ENCODE measurements at regions of chr15 and their contacts with region 1.

Region 1: GRCh38 chr15:80776420-80777045 is 2.6 kb upstream of the CEMIP start:
- DNase-seq: peak; percentile 9 to 51
- ATAC-seq: peak; percentile 42 to 51
- H3K4me3 ChIP-seq: no peak overlapping the region
- H3K27ac ChIP-seq: peak overlapping the region in 1 of 4 donors; percentile 35
- H3K4me1 ChIP-seq: peaks cover 20 to 24% of the 10 kb centered on the region in 2 donors
- H3K27me3 ChIP-seq: peaks cover 24 to 28% (median 25%) of the 10 kb centered on the region in 3 donors
- CTCF ChIP-seq: peak; percentile 47 to 78 (median 72)
- POLR2A ChIP-seq: no peak

Region 2: DNA sequence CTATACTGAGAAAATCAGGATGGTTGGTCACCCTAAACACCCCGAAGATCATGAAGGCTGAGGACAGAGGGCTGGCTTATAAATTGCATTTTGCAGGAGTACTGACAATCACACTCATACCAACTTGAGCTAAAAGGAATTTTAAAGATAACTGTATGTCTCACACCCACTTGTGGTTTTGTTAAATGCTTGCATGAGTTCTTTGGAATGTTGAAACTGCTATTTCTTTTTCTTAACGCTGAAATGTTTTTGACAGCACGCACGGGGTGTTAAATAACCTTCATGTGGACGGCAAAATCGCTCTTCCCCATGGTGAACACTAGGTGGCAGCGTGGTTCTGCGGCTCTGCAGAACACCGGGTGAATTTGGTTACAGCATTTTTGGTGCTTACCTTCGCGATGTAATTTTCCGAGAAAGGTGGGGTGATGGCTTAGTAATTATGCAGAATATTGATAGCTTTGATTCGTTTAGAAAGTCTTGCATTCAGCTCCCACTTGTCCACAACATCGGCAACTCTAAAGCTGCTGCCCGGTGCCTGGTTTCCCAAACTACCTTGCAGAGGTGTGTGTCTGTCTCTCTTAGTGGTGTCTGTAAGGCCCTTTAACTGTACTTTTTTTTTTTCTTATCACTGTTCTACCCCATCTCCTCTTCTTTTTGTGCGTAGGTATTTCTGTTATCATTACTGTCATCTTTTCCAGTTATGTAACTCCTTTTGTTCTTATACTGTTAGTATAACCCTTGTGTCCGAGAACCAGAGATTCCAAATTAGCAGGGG is 320.7 kb before region 1 on chr15:
- in situ Hi-C with region 1: loop called (anchors 5 kb)
- intact Hi-C with region 1: loop called (anchors 1 kb)
- DNase-seq: peak; percentile 21 to 24
- ATAC-seq: peak; percentile 33 to 81
- H3K4me3 ChIP-seq: no peak overlapping the region
- H3K27ac ChIP-seq: no peak overlapping the region
- H3K4me1 ChIP-seq: no peaks in the 10 kb centered on the region
- H3K27me3 ChIP-seq: no peaks in the 10 kb centered on the region
- CTCF ChIP-seq: peak; percentile 75 to 95 (median 83)
- POLR2A ChIP-seq: no peak

Region 3: DNA sequence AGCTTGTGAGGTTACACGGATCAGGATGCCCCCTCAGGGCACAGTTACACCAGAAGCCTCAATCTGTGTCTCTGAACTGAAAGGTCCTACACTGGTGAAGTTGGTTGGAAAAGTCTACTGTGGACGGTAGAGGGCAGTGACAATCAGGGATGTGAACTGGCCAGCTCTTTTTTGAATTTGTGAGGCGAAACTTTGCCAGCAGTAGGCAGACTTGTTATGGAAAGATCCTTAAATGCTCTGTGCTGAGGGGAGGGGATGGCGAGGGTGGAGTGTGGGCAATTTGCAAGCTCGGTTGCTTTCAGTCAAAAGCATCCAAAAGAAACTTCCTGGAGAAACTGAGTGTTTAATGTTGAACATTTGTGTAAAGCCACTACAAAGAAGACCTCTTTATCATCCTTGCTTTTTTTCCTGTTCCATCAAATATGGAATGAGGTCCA is 208.8 kb before region 1 on chr15:
- in situ Hi-C with region 1: loop called in 1 of 4 experiments (anchors 25 kb)
- intact Hi-C with region 1: loop called (anchors 1 kb)
- DNase-seq: peak in 1 of 2 donors; percentile 14
- ATAC-seq: peak in 1 of 2 donors; percentile 49
- H3K4me3 ChIP-seq: no peak overlapping the region
- H3K27ac ChIP-seq: no peak overlapping the region
- H3K4me1 ChIP-seq: no peaks in the 10 kb centered on the region
- H3K27me3 ChIP-seq: no peaks in the 10 kb centered on the region
- CTCF ChIP-seq: peak in 4 of 5 experiments; percentile 12 to 47 (median 36)
- POLR2A ChIP-seq: no peak

Region 4: GRCh38 chr15:80615761-80616391 is 160.7 kb before region 1 on chr15:
- in situ Hi-C with region 1: no loop called
- intact Hi-C with region 1: loop called (anchors 5 kb)
- DNase-seq: peak in 1 of 2 donors; percentile 24
- ATAC-seq: peak in 1 of 2 donors; percentile 33
- H3K4me3 ChIP-seq: no peak overlapping the region
- H3K27ac ChIP-seq: no peak overlapping the region
- H3K4me1 ChIP-seq: peaks cover 0 to 2% of the 10 kb centered on the region in 2 donors
- H3K27me3 ChIP-seq: no peaks in the 10 kb centered on the region
- CTCF ChIP-seq: no peak
- POLR2A ChIP-seq: no peak

Region 5: GRCh38 chr15:80695104-80695910 is 81.2 kb before region 1 on chr15 and contains the start of gene ABHD17C:
- in situ Hi-C with region 1: no loop called
- intact Hi-C with region 1: loop called (anchors 2 kb)
- DNase-seq: peak; percentile 22 to 25
- ATAC-seq: peak; percentile 80 to 84
- H3K4me3 ChIP-seq: peak within 1 kb of the TSS; percentile 65 to 93 (median 82)
- H3K27ac ChIP-seq: peak within 1 kb of the TSS; percentile 64 to 82 (median 70)
- H3K4me1 ChIP-seq: peaks cover 7 to 10% of the 10 kb centered on the region in 2 donors
- H3K27me3 ChIP-seq: no peaks in the 10 kb centered on the region
- CTCF ChIP-seq: no peak
- POLR2A ChIP-seq: no peak
- total RNA-seq, gene ABHD17C: 0.98 to 3.3 (median 2.5) TPM in 3 of 4 donors, not detected in the other

Region 6: DNA sequence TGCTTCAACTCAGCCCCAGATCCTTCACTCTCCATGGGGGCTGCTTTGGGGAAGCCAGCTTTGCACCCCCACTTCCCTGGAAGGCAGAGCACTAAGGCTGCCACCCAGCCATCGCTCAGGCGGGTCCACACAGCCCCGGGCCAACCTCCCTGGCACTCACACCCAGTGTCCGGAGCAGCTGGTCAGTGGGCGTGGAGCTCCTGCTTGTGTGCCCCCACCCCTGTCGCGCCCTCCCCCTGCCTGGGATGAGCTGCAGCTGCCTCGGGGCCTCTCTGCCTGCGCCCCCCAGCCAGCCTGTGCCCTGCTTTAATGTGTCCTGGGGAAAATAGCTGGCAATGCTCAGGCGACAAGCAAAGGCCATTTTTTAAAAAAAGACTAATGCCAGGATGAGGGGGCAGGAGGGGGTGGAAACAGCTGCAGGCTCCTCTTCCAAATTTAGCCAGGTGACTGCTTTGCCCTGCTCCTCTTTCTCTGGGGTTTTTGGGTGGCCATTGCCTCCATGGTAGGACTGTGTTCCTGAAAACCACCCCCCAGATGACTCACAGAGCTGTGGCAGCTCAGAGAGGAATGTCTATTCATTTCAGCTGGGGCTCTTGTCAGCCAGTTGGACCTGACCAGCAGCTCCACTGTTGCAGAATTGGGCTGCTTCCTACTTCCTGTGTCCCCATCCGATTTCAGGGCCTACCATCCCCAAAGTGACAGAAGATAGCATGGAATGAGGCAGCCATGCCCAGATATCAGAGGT is 67.7 kb after region 1 on chr15:
- in situ Hi-C with region 1: no loop called
- intact Hi-C with region 1: no loop called
- DNase-seq: no peak
- ATAC-seq: peak in 1 of 2 donors; percentile 16
- H3K4me3 ChIP-seq: no peak overlapping the region
- H3K27ac ChIP-seq: no peak overlapping the region
- H3K4me1 ChIP-seq: no peaks in the 10 kb centered on the region
- H3K27me3 ChIP-seq: peaks cover 4 to 11% (median 5%) of the 10 kb centered on the region in 3 donors
- CTCF ChIP-seq: no peak
- POLR2A ChIP-seq: no peak

Region 7: GRCh38 chr15:80856809-80857377 is 80.4 kb after region 1 on chr15:
- in situ Hi-C with region 1: no loop called
- intact Hi-C with region 1: no loop called
- DNase-seq: peak; percentile 47 to 48
- ATAC-seq: peak; percentile 54 to 63
- H3K4me3 ChIP-seq: no peak overlapping the region
- H3K27ac ChIP-seq: no peak overlapping the region
- H3K4me1 ChIP-seq: peaks cover 7% of the 10 kb centered on the region in 2 donors
- H3K27me3 ChIP-seq: no peaks in the 10 kb centered on the region
- CTCF ChIP-seq: no peak
- POLR2A ChIP-seq: no peak

Region 8: GRCh38 chr15:80970018-80970658 is 193.6 kb after region 1 on chr15:
- in situ Hi-C with region 1: loop called in 2 of 4 experiments (anchors 5 to 25 kb)
- intact Hi-C with region 1: loop called (anchors 5 kb)
- DNase-seq: peak in 1 of 2 donors; percentile 33
- ATAC-seq: peak in 1 of 2 donors; percentile 65
- H3K4me3 ChIP-seq: no peak overlapping the region
- H3K27ac ChIP-seq: no peak overlapping the region
- H3K4me1 ChIP-seq: no peaks in the 10 kb centered on the region
- H3K27me3 ChIP-seq: no peaks in the 10 kb centered on the region
- CTCF ChIP-seq: peak; percentile 72 to 90 (median 80)
- POLR2A ChIP-seq: no peak

Region 9: GRCh38 chr15:81351651-81352050 is 575.1 kb after region 1 on chr15:
- in situ Hi-C with region 1: no loop called
- intact Hi-C with region 1: no loop called
- DNase-seq: no peak
- ATAC-seq: no peak
- H3K4me3 ChIP-seq: no peak overlapping the region
- H3K27ac ChIP-seq: no peak overlapping the region
- H3K4me1 ChIP-seq: no peaks in the 10 kb centered on the region
- H3K27me3 ChIP-seq: no peaks in the 10 kb centered on the region
- CTCF ChIP-seq: no peak
- POLR2A ChIP-seq: no peak